ENCODE measurements at regions of chr20 and their contacts with region 1.

Region 1: GRCh38 chr20:45020236-45020886 is 54.0 kb downstream of the STK4 start:
- DNase-seq: peak; percentile 33
- ATAC-seq: no peak
- H3K4me3 ChIP-seq: no peak overlapping the region
- H3K27ac ChIP-seq: no peak overlapping the region
- H3K4me1 ChIP-seq: peaks cover 6% of the 10 kb centered on the region
- H3K27me3 ChIP-seq: no peaks in the 10 kb centered on the region
- CTCF ChIP-seq: no peak
- POLR2A ChIP-seq: no peak
- RAD21 ChIP-seq: no peak

Region 2: DNA sequence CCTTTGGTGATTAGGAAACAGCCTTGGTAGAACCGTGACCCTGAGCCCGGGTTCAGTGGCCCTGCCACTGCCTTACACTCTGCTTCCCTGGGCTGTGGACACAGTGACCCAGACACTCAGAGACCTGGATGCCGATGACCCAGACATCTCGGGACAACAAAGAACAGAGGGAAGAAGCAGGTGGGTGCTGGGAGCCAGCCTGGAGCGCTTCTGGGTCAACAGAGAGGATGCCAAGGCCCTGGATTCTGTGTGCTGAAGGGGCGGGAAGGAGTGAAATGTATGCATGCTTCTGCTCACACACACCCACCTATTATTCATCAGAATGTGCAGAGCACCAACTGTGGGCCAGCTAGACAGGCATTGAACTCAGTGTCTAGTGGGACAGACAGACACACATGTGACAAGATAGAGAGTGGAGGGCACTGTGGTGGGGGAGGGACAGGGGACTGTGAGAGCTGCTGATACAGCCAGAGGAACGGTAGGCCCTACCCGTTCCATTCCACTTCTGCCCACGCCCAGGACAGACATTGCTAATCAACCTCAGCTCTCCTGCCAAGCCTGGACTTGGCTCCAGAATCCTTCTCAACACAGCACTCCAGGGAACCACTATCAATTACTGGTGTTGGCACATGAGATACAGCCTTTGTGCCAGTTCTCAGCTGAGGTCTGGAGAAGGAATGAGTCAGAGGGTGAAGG is 254.6 kb before region 1 on chr20:
- CTCF ChIA-PET with region 1: no interaction called
- POLR2A ChIA-PET with region 1: no interaction called
- dilution Hi-C with region 1: no loop called
- in situ Hi-C with region 1: no loop called
- intact Hi-C with region 1: no loop called
- DNase-seq: no peak
- ATAC-seq: no peak
- H3K4me3 ChIP-seq: no peak overlapping the region
- H3K27ac ChIP-seq: no peak overlapping the region
- H3K4me1 ChIP-seq: no peaks in the 10 kb centered on the region
- H3K27me3 ChIP-seq: peaks cover 35% of the 10 kb centered on the region
- CTCF ChIP-seq: no peak
- POLR2A ChIP-seq: no peak
- RAD21 ChIP-seq: no peak

Region 3: GRCh38 chr20:45037050-45037449 is 16.7 kb after region 1 on chr20:
- CTCF ChIA-PET with region 1: no interaction called
- POLR2A ChIA-PET with region 1: no interaction called
- dilution Hi-C with region 1: no loop called
- in situ Hi-C with region 1: no loop called
- intact Hi-C with region 1: loop called (anchors 2 kb)
- DNase-seq: peak; percentile 63
- ATAC-seq: peak; percentile 16; the same call in 1 of the 2 replicates
- H3K4me3 ChIP-seq: no peak overlapping the region
- H3K27ac ChIP-seq: no peak overlapping the region
- H3K4me1 ChIP-seq: peaks cover 13% of the 10 kb centered on the region; the same call in 1 of the 2 replicates
- H3K27me3 ChIP-seq: no peaks in the 10 kb centered on the region
- CTCF ChIP-seq: no peak
- POLR2A ChIP-seq: no peak
- RAD21 ChIP-seq: no peak

Region 4: DNA sequence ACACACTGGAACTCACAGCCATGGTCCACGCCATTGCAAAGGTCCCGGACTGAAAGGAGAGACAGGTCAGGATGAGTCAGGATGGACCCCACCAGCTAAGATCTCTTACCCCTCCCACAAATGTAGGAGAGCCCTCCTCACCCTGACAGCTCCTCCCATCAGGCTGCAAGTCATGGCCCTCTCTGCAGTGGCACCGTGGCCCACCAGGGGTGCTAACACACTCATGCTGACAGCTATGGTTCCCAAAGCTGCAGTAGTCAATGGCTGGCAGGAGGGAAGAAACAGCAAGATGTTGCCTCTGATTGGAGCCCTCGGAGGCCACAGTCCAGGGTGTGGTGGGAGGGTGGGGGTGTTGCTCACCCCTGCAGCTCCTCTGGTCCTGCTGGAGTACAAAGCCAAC is 280.6 kb after region 1 on chr20:
- CTCF ChIA-PET with region 1: no interaction called
- POLR2A ChIA-PET with region 1: interaction called, 14 read pairs
- dilution Hi-C with region 1: no loop called
- in situ Hi-C with region 1: no loop called
- intact Hi-C with region 1: no loop called
- DNase-seq: peak; percentile 19
- ATAC-seq: peak; percentile 76
- H3K4me3 ChIP-seq: no peak overlapping the region
- H3K27ac ChIP-seq: no peak overlapping the region
- H3K4me1 ChIP-seq: no peaks in the 10 kb centered on the region
- H3K27me3 ChIP-seq: peaks cover 30% of the 10 kb centered on the region
- CTCF ChIP-seq: peak; percentile 33; the same call in 1 of the 2 replicates
- POLR2A ChIP-seq: no peak
- RAD21 ChIP-seq: no peak